Activated CD8-positive, alpha-beta T cell treated with anti-CD3 and anti-CD28 coated beads, Interleukin-2, amount 10 ng/mL, durations not matched to agents 7 days and 5 days (primary cell): ENCODE measurements at regions of chr1 and their contacts with region 1.

Region 1: DNA sequence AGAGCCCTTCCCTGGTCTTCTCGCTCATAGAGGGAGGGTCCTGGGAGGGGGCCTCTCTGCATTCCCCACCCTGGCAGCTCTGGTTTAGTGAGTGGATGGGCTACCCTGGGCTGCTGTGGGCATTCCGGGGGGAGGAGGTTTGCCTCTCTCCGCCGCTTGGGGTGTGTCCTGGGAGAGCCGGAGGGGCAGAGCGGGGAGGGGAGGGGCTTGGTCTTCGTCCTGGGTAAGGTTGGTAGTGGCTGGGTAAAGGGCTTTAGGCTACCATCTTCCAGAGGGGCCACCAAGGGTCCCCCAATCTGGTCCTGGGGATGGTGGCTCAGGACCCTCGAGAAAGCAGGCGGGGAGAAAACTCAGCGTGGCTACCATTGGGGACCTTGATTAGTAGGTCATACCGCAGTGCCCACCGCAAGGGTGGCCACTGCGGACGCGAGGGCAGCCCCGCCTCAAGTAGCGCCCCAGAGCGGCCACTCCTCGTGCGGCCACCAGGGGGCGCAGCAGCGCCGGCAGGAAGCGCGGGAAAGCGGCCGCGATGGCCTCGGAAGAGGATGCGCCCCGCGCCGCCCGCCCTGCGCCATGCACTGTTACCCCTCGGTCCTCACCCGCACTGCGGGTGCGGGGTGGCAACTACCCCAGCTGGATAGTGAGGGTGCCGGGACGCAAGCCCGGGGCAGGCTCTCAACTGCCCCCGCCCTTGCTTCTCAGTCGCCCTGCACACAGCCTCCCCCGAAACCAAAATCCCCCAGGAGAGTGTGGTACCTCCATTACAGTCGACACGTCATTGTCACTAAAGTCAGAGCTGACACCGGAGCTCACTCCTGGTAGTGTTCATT is 44.1 kb upstream of the SLC25A33 start:
- DNase-seq: peak; percentile 74
- ATAC-seq: peak; percentile 86
- H3K4me3 Mint-ChIP-seq: peak overlapping the region; percentile 70
- H3K27ac Mint-ChIP-seq: peak overlapping the region; percentile 8
- H3K4me1 Mint-ChIP-seq: peaks cover 11% of the 10 kb centered on the region
- H3K27me3 Mint-ChIP-seq: peaks cover 10% of the 10 kb centered on the region

Region 2: DNA sequence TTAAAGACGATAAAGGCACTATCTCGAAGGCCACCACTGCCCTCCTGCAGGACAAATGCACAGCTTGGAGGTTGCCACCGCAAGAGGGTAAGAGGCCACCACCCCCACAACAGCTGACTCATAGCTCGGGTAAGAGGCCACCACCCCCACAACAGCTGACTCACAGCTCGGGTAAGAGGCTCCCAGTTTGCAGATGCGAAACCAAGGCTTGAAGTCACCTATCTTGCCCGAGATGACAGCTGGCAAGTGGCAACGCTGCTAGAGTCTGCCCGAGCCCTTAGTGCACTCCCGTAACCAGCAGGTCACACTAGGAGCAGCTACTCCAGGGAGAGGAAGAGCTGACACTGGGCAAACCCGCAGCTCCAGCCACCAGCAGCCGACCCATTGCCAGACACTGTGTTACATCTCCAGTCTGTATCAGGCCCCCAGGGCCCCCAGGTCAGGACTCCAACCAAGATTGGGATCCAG is 219.5 kb before region 1 on chr1:
- CTCF ChIA-PET with region 1: interaction called, 11 read pairs
- POLR2A ChIA-PET with region 1: no interaction called
- DNase-seq: peak; percentile 62
- ATAC-seq: peak; percentile 59
- H3K4me3 Mint-ChIP-seq: no peak overlapping the region
- H3K27ac Mint-ChIP-seq: no peak overlapping the region
- H3K4me1 Mint-ChIP-seq: peaks cover 33% of the 10 kb centered on the region
- H3K27me3 Mint-ChIP-seq: peaks cover 3% of the 10 kb centered on the region

Region 3: DNA sequence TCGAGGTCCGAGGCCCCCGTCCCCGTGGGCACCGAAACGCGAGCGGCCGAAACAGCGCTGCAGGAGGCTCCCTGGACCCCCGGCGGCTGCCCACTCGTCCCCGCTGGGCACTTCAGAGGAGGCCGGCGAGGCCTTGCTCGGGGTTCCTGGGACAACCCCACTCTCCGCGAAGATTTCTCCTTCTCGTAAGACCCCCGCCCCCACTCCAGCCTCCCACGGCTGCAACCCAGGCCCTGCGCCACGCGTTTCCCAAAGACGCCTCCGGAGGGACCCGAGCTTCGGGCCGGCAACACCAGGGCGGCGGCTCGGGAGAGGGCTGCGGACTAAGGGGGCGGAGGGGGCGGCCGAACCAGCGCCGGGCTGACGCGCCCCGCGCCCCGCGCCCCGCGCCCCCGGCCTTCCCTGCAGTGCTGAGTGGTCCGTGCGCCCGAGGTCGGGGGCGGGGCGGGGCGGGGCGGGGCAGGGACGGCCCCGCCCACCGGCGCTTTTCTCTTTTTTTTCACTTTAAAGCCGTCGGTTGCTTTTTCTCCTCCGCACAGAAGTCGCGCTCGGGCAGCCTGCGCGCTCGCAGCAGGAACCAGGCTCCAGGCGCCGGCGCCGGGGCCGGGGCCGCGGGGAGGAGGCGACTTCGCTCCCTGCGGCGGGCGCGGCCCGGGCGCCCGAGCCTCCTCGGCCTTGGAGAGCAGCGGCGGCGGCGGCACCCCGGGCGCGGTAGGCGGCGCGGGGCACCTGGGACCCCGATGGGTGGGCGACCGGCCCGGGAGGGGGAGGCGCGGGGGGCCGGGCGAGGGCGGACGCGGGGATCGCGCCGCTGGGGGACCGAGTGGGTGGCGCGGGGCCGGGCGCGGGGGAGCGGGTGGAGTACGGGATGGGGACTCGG is 202.5 kb before region 1 on chr1 and contains the start of gene SPSB1:
- CTCF ChIA-PET with region 1: interaction called, 62 read pairs
- POLR2A ChIA-PET with region 1: no interaction called
- DNase-seq: peak; percentile 72
- ATAC-seq: peak; percentile 76
- H3K4me3 Mint-ChIP-seq: peak within 1 kb of the TSS; percentile 51
- H3K27ac Mint-ChIP-seq: no peak within 1 kb of the TSS
- H3K4me1 Mint-ChIP-seq: no peaks in the 10 kb centered on the region
- H3K27me3 Mint-ChIP-seq: peaks cover 11% of the 10 kb centered on the region
- total RNA-seq, gene SPSB1: 1.1 TPM

Region 4: GRCh38 chr1:9388335-9389180 is 106.6 kb before region 1 on chr1:
- CTCF ChIA-PET with region 1: no interaction called
- POLR2A ChIA-PET with region 1: no interaction called
- DNase-seq: no peak
- ATAC-seq: no peak
- H3K4me3 Mint-ChIP-seq: no peak overlapping the region
- H3K27ac Mint-ChIP-seq: no peak overlapping the region
- H3K4me1 Mint-ChIP-seq: peaks cover 5% of the 10 kb centered on the region
- H3K27me3 Mint-ChIP-seq: peaks cover 12% of the 10 kb centered on the region

Region 5: GRCh38 chr1:9558271-9558945 is 63.3 kb after region 1 on chr1:
- CTCF ChIA-PET with region 1: interaction called, 18 read pairs
- POLR2A ChIA-PET with region 1: no interaction called
- DNase-seq: peak; percentile 28
- ATAC-seq: peak; percentile 74
- H3K4me3 Mint-ChIP-seq: no peak overlapping the region
- H3K27ac Mint-ChIP-seq: peak overlapping the region; percentile 2
- H3K4me1 Mint-ChIP-seq: peaks cover 29% of the 10 kb centered on the region
- H3K27me3 Mint-ChIP-seq: no peaks in the 10 kb centered on the region

Region 6: DNA sequence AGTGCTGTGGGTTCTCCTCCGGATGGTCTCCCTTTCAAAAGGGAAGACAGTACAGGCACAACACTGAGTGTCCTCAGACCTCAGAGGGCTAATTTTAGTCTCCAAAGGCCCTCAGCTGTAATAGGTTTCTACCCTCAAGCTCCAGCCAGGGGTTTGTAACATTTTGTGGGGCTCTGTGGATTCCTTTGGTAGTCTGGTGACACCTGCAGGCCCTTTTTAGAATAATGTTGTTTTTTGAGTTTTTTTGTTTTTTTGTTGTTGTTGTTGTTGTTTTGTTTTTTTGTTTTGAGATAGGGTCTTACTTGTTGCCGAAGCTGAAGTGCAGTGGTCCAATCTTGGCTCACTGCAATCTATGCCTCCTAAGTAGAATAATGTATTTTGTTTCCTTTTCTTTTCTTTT is 78.6 kb after region 1 on chr1:
- CTCF ChIA-PET with region 1: interaction called, 71 read pairs
- POLR2A ChIA-PET with region 1: no interaction called
- DNase-seq: no peak
- ATAC-seq: no peak
- H3K4me3 Mint-ChIP-seq: no peak overlapping the region
- H3K27ac Mint-ChIP-seq: no peak overlapping the region
- H3K4me1 Mint-ChIP-seq: no peaks in the 10 kb centered on the region
- H3K27me3 Mint-ChIP-seq: no peaks in the 10 kb centered on the region

Region 7: GRCh38 chr1:9753121-9753531 is 258.0 kb after region 1 on chr1:
- CTCF ChIA-PET with region 1: no interaction called
- POLR2A ChIA-PET with region 1: no interaction called
- DNase-seq: no peak
- ATAC-seq: no peak
- H3K4me3 Mint-ChIP-seq: no peak overlapping the region
- H3K27ac Mint-ChIP-seq: peak overlapping the region; percentile 15
- H3K4me1 Mint-ChIP-seq: no peaks in the 10 kb centered on the region
- H3K27me3 Mint-ChIP-seq: no peaks in the 10 kb centered on the region